Activated T-helper 1 cell treated with anti-CD3 and anti-CD28 coated beads, Interleukin-12 subunit alpha, Interleukin-12 subunit beta, Interleukin-2, Interleukin-4 antibody, amounts not matched to agents 30 ng/mL and 10 ng/mL and 1 ng/mL, durations not matched to agents 14 hours and 24 hours and 36 hours (primary cell): ENCODE measurements at regions of chr1 and their contacts with region 1.

Region 1: DNA sequence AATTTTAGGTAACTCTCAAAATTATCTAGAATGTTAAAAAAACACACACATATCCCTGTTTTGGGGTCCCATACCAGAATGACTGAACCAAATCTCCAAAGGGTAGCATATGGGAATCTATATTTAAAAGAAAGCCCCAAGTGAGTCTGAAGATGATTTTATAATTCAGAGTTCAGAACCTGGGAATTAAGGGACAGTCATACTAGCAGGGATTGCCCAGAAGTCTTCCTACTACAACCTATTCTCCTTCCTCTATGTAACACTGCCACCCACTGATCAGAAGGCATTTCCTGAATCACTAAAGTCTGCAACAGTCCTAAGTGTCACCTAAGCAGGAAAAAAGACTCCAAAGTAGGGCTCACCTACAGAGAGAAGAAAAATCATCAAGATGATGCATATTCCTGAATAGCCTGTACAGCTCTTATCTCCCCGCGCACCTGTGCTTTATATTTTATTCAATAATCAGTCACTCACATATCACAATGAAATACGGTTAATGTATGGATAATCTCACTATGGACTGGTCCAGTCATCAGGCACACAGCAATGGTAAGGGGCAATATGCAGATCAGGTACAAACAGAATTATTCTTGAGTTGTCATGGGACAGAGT is 4.9 kb downstream of the RGS1 start:
- DNase-seq: no peak
- H3K4me3 Mint-ChIP-seq: peak overlapping the region; percentile 60
- H3K27ac Mint-ChIP-seq: no peak overlapping the region
- H3K4me1 Mint-ChIP-seq: peaks cover 71% of the 10 kb centered on the region
- H3K27me3 Mint-ChIP-seq: peaks cover 8% of the 10 kb centered on the region

Region 2: GRCh38 chr1:191984856-191985255 is 595.6 kb before region 1 on chr1:
- intact Hi-C with region 1: no loop called
- DNase-seq: no peak
- H3K4me3 Mint-ChIP-seq: no peak overlapping the region
- H3K27ac Mint-ChIP-seq: no peak overlapping the region
- H3K4me1 Mint-ChIP-seq: no peaks in the 10 kb centered on the region
- H3K27me3 Mint-ChIP-seq: no peaks in the 10 kb centered on the region

Region 3: GRCh38 chr1:192477630-192478029 is 102.8 kb before region 1 on chr1:
- intact Hi-C with region 1: loop called (anchors 1 kb)
- DNase-seq: no peak
- H3K4me3 Mint-ChIP-seq: no peak overlapping the region
- H3K27ac Mint-ChIP-seq: no peak overlapping the region
- H3K4me1 Mint-ChIP-seq: no peaks in the 10 kb centered on the region
- H3K27me3 Mint-ChIP-seq: peaks cover 12% of the 10 kb centered on the region

Region 4: GRCh38 chr1:192516776-192517297 is 63.6 kb before region 1 on chr1:
- intact Hi-C with region 1: loop called (anchors 1 kb)
- DNase-seq: peak; percentile 67
- H3K4me3 Mint-ChIP-seq: peak overlapping the region; percentile 79
- H3K27ac Mint-ChIP-seq: peak overlapping the region; percentile 92
- H3K4me1 Mint-ChIP-seq: peaks cover 58% of the 10 kb centered on the region
- H3K27me3 Mint-ChIP-seq: peaks cover 4% of the 10 kb centered on the region

Region 5: DNA sequence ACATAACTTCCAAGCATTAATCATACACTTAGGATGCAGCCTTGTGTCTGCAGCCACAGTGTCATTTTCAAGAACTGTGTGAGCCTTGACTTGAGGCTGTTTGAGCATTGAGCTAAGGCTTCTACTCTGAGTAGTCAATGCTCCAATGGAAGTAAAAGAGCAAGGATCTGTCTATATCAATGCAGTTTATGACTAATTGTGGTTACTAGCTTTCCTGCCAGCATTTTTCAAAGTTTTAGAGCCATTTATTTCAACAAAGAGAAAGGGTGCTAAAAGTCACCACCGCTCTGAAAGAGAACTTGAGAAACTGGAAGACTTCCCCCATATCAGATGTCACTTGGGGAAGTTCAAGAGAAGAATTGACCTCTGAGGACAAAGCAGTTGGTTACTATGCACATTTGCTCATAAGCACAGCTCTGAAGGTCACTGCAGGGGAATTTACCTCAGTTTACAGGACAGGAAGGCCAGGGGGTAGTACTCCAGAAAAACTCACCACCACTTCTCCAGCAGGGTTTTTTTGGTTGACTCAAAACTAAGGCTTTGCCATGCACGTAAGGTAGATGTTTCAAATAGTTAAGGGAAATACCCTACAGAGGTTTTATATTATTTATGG is 29.4 kb before region 1 on chr1:
- intact Hi-C with region 1: loop called (anchors 1 kb)
- DNase-seq: no peak
- H3K4me3 Mint-ChIP-seq: peak overlapping the region; percentile 10
- H3K27ac Mint-ChIP-seq: peak overlapping the region; percentile 63
- H3K4me1 Mint-ChIP-seq: peaks cover 65% of the 10 kb centered on the region
- H3K27me3 Mint-ChIP-seq: no peaks in the 10 kb centered on the region

Region 6: GRCh38 chr1:192609110-192610079 is 28.9 kb after region 1 on chr1:
- intact Hi-C with region 1: loop called (anchors 1 kb)
- DNase-seq: peak; percentile 36
- H3K4me3 Mint-ChIP-seq: no peak overlapping the region
- H3K27ac Mint-ChIP-seq: peak overlapping the region; percentile 3
- H3K4me1 Mint-ChIP-seq: peaks cover 14% of the 10 kb centered on the region
- H3K27me3 Mint-ChIP-seq: peaks cover 4% of the 10 kb centered on the region

Region 7: GRCh38 chr1:192983349-192983980 is 403.0 kb after region 1 on chr1:
- intact Hi-C with region 1: loop called (anchors 2 kb)
- DNase-seq: no peak
- H3K4me3 Mint-ChIP-seq: peak overlapping the region; percentile 41
- H3K27ac Mint-ChIP-seq: peak overlapping the region; percentile 88
- H3K4me1 Mint-ChIP-seq: peaks cover 56% of the 10 kb centered on the region
- H3K27me3 Mint-ChIP-seq: no peaks in the 10 kb centered on the region